Right ventricle myocardium superior (tissue), 1 donor: ENCODE measurements at regions of chr6 and their contacts with region 1.

Region 1: DNA sequence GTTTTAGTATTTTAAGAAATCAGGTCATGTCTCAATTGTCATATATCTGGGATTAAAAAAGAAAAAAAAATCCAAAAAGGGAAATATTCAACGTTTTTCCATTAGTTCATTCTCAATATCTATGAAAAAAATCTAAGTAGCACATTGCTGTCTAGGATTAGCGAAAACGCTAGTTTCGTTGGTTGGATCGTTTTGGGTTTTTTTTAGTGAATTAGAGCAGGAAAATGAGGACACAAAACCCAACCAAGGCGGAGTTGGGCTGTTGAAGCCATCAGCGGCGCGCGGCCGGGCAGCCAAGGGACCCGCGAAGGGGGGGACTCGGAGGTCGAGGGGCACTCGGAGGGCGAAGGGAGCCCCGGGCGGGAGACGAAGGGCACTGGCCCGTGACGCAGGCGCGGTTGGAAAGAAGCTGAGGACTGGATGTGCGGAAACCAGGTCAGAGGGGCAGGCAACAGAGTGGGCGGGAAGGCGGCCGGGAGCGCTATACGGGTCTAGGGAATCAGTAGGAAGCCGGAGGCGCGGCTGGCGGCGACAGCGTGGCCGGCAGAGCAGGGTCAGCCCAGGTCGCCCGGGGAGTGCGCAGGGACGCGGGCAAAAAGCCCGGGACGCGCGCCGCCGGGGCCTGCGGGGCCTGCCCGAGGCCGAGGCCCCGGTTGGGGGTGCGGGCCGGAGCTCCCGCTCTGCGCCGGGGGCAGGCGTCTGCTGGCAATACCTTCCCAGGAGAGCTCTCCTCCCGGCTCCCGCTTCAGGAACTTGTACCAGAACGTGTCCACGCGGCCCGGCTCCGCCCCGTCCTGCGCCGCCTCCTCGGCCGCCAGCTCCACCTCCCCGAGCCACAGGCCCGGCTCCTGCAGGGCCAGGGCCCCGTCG is 599 bp downstream of the EPM2A start:
- DNase-seq: peak; percentile 94
- ATAC-seq: peak; percentile 92

Region 2: GRCh38 chr6:144820270-144820669 is 914.5 kb before region 1 on chr6:
- intact Hi-C with region 1: no loop called
- DNase-seq: no peak
- ATAC-seq: no peak

Region 3: GRCh38 chr6:145685932-145686331 is 48.8 kb before region 1 on chr6:
- intact Hi-C with region 1: no loop called
- DNase-seq: no peak
- ATAC-seq: peak; percentile 68

Region 4: GRCh38 chr6:145772846-145773245 is 38.1 kb after region 1 on chr6:
- intact Hi-C with region 1: no loop called
- DNase-seq: no peak
- ATAC-seq: no peak

Region 5: GRCh38 chr6:145814501-145815308 is 80.0 kb after region 1 on chr6 and contains the start of gene FBXO30:
- intact Hi-C with region 1: loop called (anchors 5 kb)
- DNase-seq: peak; percentile 95
- ATAC-seq: peak; percentile 98
- total RNA-seq, gene FBXO30: 12.8 TPM

Region 6: DNA sequence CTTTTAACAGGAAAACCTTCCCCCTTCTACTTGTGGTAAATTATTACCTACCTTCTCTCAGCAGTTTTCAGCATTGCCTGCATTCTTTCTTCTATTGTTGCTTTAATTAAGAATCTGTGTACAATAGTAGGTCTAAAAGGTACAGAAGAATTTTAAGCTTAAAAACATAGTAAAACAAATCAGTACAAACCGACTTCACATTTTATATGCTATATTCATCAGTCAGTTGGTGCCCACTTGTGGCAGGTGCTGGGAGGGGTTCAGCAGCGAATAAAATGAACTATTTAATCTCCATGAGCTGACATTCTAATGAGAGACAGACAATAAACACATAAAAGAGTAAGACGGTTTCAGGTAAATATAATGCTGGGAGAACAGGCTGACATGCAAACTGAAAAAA is 153.2 kb after region 1 on chr6:
- intact Hi-C with region 1: loop called (anchors 10 kb)
- DNase-seq: no peak
- ATAC-seq: peak; percentile 74